Mammary epithelial cell (primary cell): ENCODE measurements at regions of chr4 and their contacts with region 1.

Region 1: DNA sequence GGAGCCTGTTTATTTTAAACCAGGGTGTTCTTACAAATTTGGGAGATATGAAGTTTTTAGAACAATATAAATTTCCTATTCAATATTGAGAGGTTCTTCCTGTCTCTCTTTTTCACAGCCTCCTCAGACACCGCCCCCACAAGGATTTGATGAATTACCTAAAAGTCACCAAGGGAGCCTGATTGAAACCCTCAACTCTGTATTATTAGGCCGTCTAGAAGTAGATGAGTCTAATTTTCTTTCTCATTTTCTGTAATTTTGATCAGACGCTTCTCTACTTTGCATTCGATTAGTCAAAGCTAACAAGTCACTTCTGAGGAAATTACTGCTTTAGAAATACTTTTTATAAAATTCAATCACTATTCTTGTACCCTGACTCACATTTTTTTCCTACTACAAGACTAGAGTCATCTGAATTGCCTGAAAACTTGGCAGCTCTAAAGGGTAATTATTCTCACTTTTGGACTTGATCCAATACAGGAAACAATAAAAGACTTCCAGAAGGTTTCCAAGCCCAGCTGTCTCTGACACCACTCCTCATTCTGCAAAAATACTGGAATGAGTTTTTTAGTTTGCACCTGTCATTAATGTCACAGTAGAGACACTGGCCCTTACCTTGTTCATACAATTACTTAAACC is 111.2 kb downstream of the ELOVL6 start:
- DNase-seq: peak; percentile 77
- H3K4me3 ChIP-seq: no peak overlapping the region
- H3K27ac ChIP-seq: no peak overlapping the region
- H3K4me1 ChIP-seq: peaks cover 67% of the 10 kb centered on the region
- H3K27me3 ChIP-seq: no peaks in the 10 kb centered on the region
- CTCF ChIP-seq: no peak

Region 2: GRCh38 chr4:110132816-110133719 is 45.9 kb after region 1 on chr4:
- CTCF ChIA-PET with region 1: no interaction called
- dilution Hi-C with region 1: no loop called
- in situ Hi-C with region 1: no loop called
- intact Hi-C with region 1: loop called (anchors 5 kb)
- DNase-seq: no peak
- H3K4me3 ChIP-seq: no peak overlapping the region
- H3K27ac ChIP-seq: no peak overlapping the region
- H3K4me1 ChIP-seq: peaks cover 24% of the 10 kb centered on the region
- H3K27me3 ChIP-seq: no peaks in the 10 kb centered on the region
- CTCF ChIP-seq: no peak

Region 3: GRCh38 chr4:110165382-110166285 is 78.4 kb after region 1 on chr4:
- CTCF ChIA-PET with region 1: no interaction called
- dilution Hi-C with region 1: no loop called
- in situ Hi-C with region 1: no loop called
- intact Hi-C with region 1: loop called (anchors 1 kb)
- DNase-seq: peak; percentile 85
- H3K4me3 ChIP-seq: no peak overlapping the region
- H3K27ac ChIP-seq: peak overlapping the region; percentile 46
- H3K4me1 ChIP-seq: peaks cover 34% of the 10 kb centered on the region
- H3K27me3 ChIP-seq: no peaks in the 10 kb centered on the region
- CTCF ChIP-seq: no peak

Region 4: GRCh38 chr4:110196206-110196870 is 109.1 kb after region 1 on chr4:
- CTCF ChIA-PET with region 1: no interaction called
- dilution Hi-C with region 1: no loop called
- in situ Hi-C with region 1: no loop called
- intact Hi-C with region 1: loop called (anchors 2 kb)
- DNase-seq: peak; percentile 40
- H3K4me3 ChIP-seq: peak overlapping the region; percentile 62 to 82 (median 78)
- H3K27ac ChIP-seq: peak overlapping the region; percentile 71
- H3K4me1 ChIP-seq: peaks cover 29% of the 10 kb centered on the region
- H3K27me3 ChIP-seq: no peaks in the 10 kb centered on the region
- CTCF ChIP-seq: no peak